ENCODE measurements at regions of chr18 and their contacts with region 1.

Region 1: GRCh38 chr18:54149078-54149697 is 75.3 kb downstream of the MBD2 start:
- DNase-seq: peak; percentile 75
- H3K4me3 Mint-ChIP-seq: peak overlapping the region; percentile 64
- H3K27ac Mint-ChIP-seq: peak overlapping the region; percentile 93
- H3K4me1 Mint-ChIP-seq: peaks cover 50% of the 10 kb centered on the region
- H3K27me3 Mint-ChIP-seq: no peaks in the 10 kb centered on the region

Region 2: DNA sequence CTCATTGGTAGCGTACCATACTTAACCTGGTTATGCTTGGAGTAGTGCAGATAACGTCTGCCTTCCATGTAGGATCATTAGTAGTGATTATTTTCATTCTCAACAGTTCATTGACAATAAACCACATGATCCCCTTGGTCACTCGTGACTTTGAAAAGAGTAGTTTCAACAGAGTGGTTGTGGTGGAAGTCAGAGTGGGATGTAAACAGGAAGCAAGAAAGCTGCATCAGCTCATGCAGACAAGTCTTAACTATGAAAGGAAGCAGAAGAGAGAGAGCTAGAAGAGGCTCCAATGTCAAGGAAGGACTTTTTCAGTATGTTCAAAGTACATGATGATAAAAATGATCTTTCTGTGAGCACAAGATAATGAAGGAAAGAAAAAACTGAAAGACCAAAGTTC is 212.2 kb before region 1 on chr18:
- intact Hi-C with region 1: loop called (anchors 10 kb)
- DNase-seq: peak; percentile 59
- H3K4me3 Mint-ChIP-seq: peak overlapping the region; percentile 5
- H3K27ac Mint-ChIP-seq: no peak overlapping the region
- H3K4me1 Mint-ChIP-seq: peaks cover 11% of the 10 kb centered on the region
- H3K27me3 Mint-ChIP-seq: no peaks in the 10 kb centered on the region

Region 3: GRCh38 chr18:54069729-54070128 is 79.5 kb before region 1 on chr18:
- intact Hi-C with region 1: no loop called
- DNase-seq: no peak
- H3K4me3 Mint-ChIP-seq: no peak overlapping the region
- H3K27ac Mint-ChIP-seq: no peak overlapping the region
- H3K4me1 Mint-ChIP-seq: no peaks in the 10 kb centered on the region
- H3K27me3 Mint-ChIP-seq: peaks cover 11% of the 10 kb centered on the region

Region 4: DNA sequence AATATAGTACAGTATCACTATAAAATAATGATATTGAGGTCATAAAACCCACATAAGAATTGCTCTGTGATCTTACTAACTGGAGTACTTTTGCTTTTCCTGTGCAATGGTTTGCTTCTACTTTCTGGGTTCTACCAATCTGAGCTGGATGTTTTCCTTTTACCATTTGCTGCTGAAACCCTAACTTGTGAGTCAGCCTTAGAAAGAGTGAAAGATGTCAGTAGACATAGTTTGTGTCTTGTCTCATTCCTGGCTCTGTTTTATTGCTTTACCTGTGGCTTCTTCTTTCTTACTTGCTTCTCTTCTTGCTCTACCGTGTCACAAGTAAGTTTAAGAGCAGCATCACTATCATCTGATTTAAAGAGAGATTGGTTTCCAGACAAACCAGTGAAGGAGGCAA is 14.3 kb after region 1 on chr18:
- intact Hi-C with region 1: loop called (anchors 1 kb)
- DNase-seq: peak; percentile 49
- H3K4me3 Mint-ChIP-seq: no peak overlapping the region
- H3K27ac Mint-ChIP-seq: peak overlapping the region; percentile 86
- H3K4me1 Mint-ChIP-seq: peaks cover 22% of the 10 kb centered on the region
- H3K27me3 Mint-ChIP-seq: no peaks in the 10 kb centered on the region

Region 5: DNA sequence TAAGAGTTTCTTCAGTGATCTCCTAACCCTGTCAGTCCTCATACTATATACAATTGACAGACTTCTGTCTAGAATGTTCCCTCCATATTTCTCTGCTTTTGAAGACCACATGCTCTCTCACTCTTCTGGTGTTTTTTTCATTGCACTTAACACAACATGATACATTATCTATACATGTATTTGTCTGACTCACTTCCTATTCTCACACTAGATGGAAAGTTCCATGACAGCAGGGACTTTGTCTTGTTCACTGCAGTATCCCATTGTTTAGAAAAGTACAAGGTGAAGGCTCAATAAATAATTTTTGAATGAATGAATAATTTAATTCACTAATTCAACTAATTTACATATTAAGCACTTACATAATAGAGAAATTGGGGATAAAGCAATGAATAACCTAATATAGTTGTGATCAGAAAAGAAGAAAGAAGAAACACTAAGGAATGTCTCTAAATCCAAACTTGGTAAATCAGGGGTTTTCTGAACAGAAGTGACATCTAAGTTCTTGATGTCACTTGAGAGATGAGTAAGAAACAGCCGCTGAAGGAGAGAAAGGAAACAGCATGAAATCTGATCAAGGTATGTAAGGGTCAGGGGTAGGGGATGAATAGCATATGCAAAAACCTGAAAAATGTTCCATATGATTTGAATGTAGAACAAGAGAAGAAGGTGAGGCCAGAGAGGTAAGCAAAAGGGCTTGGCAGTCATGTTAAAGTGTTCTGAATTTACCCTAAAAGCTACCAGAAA is 32.8 kb after region 1 on chr18:
- intact Hi-C with region 1: loop called (anchors 1 kb)
- DNase-seq: no peak
- H3K4me3 Mint-ChIP-seq: no peak overlapping the region
- H3K27ac Mint-ChIP-seq: no peak overlapping the region
- H3K4me1 Mint-ChIP-seq: peaks cover 10% of the 10 kb centered on the region
- H3K27me3 Mint-ChIP-seq: no peaks in the 10 kb centered on the region

Region 6: GRCh38 chr18:54224379-54225014 is 75.3 kb after region 1 on chr18 and contains the start of gene MBD2:
- intact Hi-C with region 1: loop called (anchors 1 kb)
- DNase-seq: peak; percentile 99
- H3K4me3 Mint-ChIP-seq: peak within 1 kb of the TSS; percentile 92
- H3K27ac Mint-ChIP-seq: peak within 1 kb of the TSS; percentile 98
- H3K4me1 Mint-ChIP-seq: peaks cover 34% of the 10 kb centered on the region
- H3K27me3 Mint-ChIP-seq: no peaks in the 10 kb centered on the region
- total RNA-seq, gene MBD2: 195 and 200 TPM in 2 replicates

Region 7: GRCh38 chr18:54269893-54270844 is 121.0 kb after region 1 on chr18:
- intact Hi-C with region 1: loop called (anchors 1 kb)
- DNase-seq: peak; percentile 89
- H3K4me3 Mint-ChIP-seq: peak overlapping the region; percentile 85
- H3K27ac Mint-ChIP-seq: peak overlapping the region; percentile 95
- H3K4me1 Mint-ChIP-seq: peaks cover 40% of the 10 kb centered on the region
- H3K27me3 Mint-ChIP-seq: peaks cover 2% of the 10 kb centered on the region

Region 8: GRCh38 chr18:54357660-54358494 is 208.7 kb after region 1 on chr18 and contains the starts of genes C18orf54 and STARD6:
- intact Hi-C with region 1: loop called (anchors 1 kb)
- DNase-seq: peak; percentile 98
- H3K4me3 Mint-ChIP-seq: peak within 1 kb of the TSS; percentile 99
- H3K27ac Mint-ChIP-seq: peak within 1 kb of the TSS; percentile 100
- H3K4me1 Mint-ChIP-seq: peaks cover 25% of the 10 kb centered on the region
- H3K27me3 Mint-ChIP-seq: no peaks in the 10 kb centered on the region
- total RNA-seq, gene C18orf54: 10.9 and 12.8 TPM in 2 replicates
- total RNA-seq, gene STARD6: not detected in 2 replicates

Measured in activated CD4-positive, alpha-beta T cell treated with anti-CD3 and anti-CD28 coated beads, Interleukin-2, amount 10 ng/mL, durations not matched to agents 24 days and 14 days (primary cell).